ENCODE measurements at regions of chr15 and their contacts with region 1.

Region 1: GRCh38 chr15:99733268-99734039 is at the start of gene LYSMD4:
- DNase-seq: peak; percentile 98
- H3K4me3 ChIP-seq: peak within 1 kb of the TSS; percentile 81
- H3K27ac ChIP-seq: peak within 1 kb of the TSS; percentile 69
- H3K4me1 ChIP-seq: peaks cover 4% of the 10 kb centered on the region
- H3K27me3 ChIP-seq: no peaks in the 10 kb centered on the region
- CTCF ChIP-seq: no peak
- total RNA-seq, gene LYSMD4: 5.3 and 5.8 TPM in 2 replicates

Region 2: GRCh38 chr15:99635807-99636206 is 97.6 kb before region 1 on chr15:
- CTCF ChIA-PET with region 1: no interaction called
- POLR2A ChIA-PET with region 1: interaction called, 12 read pairs
- intact Hi-C with region 1: no loop called
- DNase-seq: no peak
- H3K4me3 ChIP-seq: no peak overlapping the region
- H3K27ac ChIP-seq: no peak overlapping the region
- H3K4me1 ChIP-seq: peaks cover 13% of the 10 kb centered on the region
- H3K27me3 ChIP-seq: no peaks in the 10 kb centered on the region
- CTCF ChIP-seq: no peak

Region 3: GRCh38 chr15:100241572-100242482 is 508.4 kb after region 1 on chr15:
- CTCF ChIA-PET with region 1: no interaction called
- POLR2A ChIA-PET with region 1: no interaction called
- intact Hi-C with region 1: no loop called
- DNase-seq: no peak
- H3K4me3 ChIP-seq: no peak overlapping the region
- H3K27ac ChIP-seq: no peak overlapping the region
- H3K4me1 ChIP-seq: no peaks in the 10 kb centered on the region
- H3K27me3 ChIP-seq: no peaks in the 10 kb centered on the region
- CTCF ChIP-seq: no peak

Region 4: GRCh38 chr15:100311154-100311625 is 577.7 kb after region 1 on chr15:
- CTCF ChIA-PET with region 1: no interaction called
- POLR2A ChIA-PET with region 1: no interaction called
- intact Hi-C with region 1: no loop called
- DNase-seq: no peak
- H3K4me3 ChIP-seq: no peak overlapping the region
- H3K27ac ChIP-seq: no peak overlapping the region
- H3K4me1 ChIP-seq: no peaks in the 10 kb centered on the region
- H3K27me3 ChIP-seq: no peaks in the 10 kb centered on the region
- CTCF ChIP-seq: no peak

Measured in A673 (cell line).